ENCODE measurements at regions of chr3 and their contacts with region 1.

Region 1: GRCh38 chr3:78659386-78659987 is 1108.3 kb downstream of the ROBO1 start:
- DNase-seq: peak; percentile 62
- H3K4me3 ChIP-seq: no peak overlapping the region
- H3K27ac ChIP-seq: no peak overlapping the region
- H3K4me1 ChIP-seq: peaks cover 4% of the 10 kb centered on the region
- H3K27me3 ChIP-seq: no peaks in the 10 kb centered on the region

Region 2: DNA sequence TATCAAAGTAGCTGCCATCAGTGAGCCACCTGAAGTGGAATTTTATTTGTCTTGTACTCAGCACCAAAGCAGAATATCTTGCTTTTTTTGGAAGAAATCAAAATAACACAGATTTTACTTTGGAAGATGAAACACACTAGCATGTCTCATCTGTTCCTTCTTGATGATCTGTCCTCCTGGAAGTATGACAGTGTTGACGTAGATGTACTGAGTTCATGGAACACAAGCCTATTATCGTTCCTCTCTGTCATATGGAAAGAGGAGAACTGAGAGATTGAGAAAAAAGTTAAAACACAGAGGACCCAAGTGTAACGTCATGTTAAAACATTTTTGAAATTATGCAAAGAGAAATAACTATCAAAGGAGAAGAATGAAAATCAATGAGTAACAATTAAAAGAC is 1279.4 kb before region 1 on chr3:
- in situ Hi-C with region 1: no loop called
- DNase-seq: peak; percentile 38
- H3K4me3 ChIP-seq: no peak overlapping the region
- H3K27ac ChIP-seq: no peak overlapping the region
- H3K4me1 ChIP-seq: no peaks in the 10 kb centered on the region
- H3K27me3 ChIP-seq: no peaks in the 10 kb centered on the region

Region 3: GRCh38 chr3:78589778-78590177 is 69.7 kb before region 1 on chr3:
- in situ Hi-C with region 1: no loop called
- DNase-seq: no peak
- H3K4me3 ChIP-seq: no peak overlapping the region
- H3K27ac ChIP-seq: no peak overlapping the region
- H3K4me1 ChIP-seq: no peaks in the 10 kb centered on the region
- H3K27me3 ChIP-seq: no peaks in the 10 kb centered on the region

Region 4: GRCh38 chr3:79497447-79498111 is 838.1 kb after region 1 on chr3:
- in situ Hi-C with region 1: loop called (anchors 25 kb)
- DNase-seq: peak; percentile 50
- H3K4me3 ChIP-seq: no peak overlapping the region
- H3K27ac ChIP-seq: no peak overlapping the region
- H3K4me1 ChIP-seq: no peaks in the 10 kb centered on the region
- H3K27me3 ChIP-seq: no peaks in the 10 kb centered on the region